ENCODE measurements at regions of chr17 and their contacts with region 1.

Region 1: DNA sequence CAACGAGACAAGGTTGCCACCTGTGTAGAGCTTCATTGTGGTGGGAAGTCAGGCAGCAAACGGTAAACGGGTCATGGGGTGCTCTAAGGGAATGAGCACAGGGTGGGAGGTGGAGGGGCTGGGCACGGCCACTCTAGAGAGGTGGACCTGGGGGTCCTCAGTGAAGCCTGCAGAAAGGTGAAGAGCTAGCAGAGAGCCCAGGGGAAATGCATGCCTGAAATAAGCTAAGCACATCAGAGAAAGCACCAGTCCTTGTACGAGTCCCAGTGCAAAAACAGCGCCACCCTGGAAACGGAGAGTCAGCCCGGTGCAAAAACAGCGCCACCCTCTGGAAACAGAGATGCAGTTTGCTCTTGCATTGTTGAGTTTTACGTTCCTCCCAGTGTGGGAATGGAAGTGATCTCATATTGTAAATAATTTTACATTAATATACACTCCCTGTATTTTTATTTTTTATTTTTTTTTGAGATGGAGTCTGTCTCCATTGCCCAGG is 65.0 kb downstream of the TBC1D16 start:
- DNase-seq: peak; percentile 73

Region 2: GRCh38 chr17:79983470-79983869 is 12.8 kb after region 1 on chr17:
- CTCF ChIA-PET with region 1: interaction called, 11 read pairs
- POLR2A ChIA-PET with region 1: no interaction called
- DNase-seq: no peak

Region 3: DNA sequence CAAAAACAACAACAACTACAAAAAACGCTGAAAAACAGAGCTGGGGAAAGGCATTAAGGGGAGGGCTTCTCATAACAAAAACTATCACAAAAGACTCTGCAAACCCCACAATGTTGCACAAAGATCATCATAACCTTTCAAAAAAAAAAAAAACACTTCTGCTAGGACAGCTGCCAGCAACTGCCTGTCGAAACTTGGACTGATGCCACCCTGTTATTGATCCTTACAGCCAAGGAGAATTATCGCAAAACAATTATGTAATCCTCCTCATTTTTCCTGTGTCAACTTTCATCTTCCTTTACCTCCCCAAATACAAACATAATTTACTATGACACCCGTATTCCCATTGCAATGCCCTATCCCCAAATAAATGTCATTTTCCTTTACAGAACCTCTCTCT is 75.1 kb after region 1 on chr17:
- CTCF ChIA-PET with region 1: no interaction called
- POLR2A ChIA-PET with region 1: no interaction called
- DNase-seq: no peak

Region 4: GRCh38 chr17:80219763-80220725 is 249.4 kb after region 1 on chr17 and contains the starts of genes SGSH and SLC26A11:
- CTCF ChIA-PET with region 1: no interaction called
- POLR2A ChIA-PET with region 1: no interaction called
- DNase-seq: peak; percentile 98

Measured in HEK293T (cell line).